A673 (cell line): ENCODE measurements at regions of chr4 and their contacts with region 1.

Region 1: GRCh38 chr4:153634738-153635353 is 49.2 kb upstream of the TLR2 start:
- DNase-seq: peak; percentile 60
- H3K4me3 ChIP-seq: no peak overlapping the region
- H3K27ac ChIP-seq: no peak overlapping the region
- H3K4me1 ChIP-seq: no peaks in the 10 kb centered on the region
- H3K27me3 ChIP-seq: no peaks in the 10 kb centered on the region
- CTCF ChIP-seq: peak; percentile 76

Region 2: DNA sequence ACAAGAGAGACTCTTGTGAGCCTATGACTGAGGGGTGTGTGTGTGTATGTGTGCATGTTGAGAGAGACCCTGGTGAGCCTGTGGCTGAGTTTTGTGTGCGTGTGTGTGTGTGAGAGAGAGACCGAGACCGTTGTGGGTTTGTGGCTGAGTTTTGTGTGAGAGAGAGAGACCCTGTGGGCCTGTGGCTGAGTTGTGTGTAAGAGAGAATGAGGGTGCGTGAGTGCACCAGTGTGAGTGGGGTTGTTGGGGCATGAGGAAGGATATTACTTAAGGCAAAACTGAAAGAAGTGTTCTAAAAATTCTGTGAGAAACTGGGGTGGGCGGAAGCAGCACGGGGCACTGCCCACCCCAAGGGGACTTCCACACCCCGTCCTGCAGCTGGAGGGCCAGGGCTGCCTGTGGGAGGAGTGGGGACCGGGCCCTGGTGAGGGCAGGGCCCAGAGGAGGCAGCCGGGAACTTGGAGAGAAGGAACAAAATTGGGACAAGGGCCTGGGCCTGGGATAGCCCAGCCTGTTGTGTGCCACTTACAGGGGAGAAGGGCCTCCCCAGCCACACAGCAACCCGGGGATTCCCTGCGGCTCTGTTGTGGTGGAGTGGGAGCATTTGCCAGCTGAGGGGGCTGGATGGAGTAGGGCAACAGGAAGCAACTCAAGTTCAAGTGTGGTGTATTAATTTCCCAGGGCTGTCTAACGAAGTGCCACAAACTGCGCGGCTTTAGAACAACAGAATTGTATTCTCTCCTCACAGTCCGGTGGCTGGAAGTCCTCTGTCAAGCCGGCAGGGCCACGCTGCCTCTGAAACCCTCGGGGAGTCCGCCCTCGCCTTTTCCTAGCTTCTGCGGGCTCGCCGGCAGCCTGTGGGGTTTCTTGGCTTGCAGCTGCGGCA is 146.6 kb before region 1 on chr4:
- CTCF ChIA-PET with region 1: no interaction called
- POLR2A ChIA-PET with region 1: no interaction called
- intact Hi-C with region 1: no loop called
- DNase-seq: peak; percentile 32
- H3K4me3 ChIP-seq: no peak overlapping the region
- H3K27ac ChIP-seq: peak overlapping the region; percentile 40
- H3K4me1 ChIP-seq: peaks cover 47% of the 10 kb centered on the region
- H3K27me3 ChIP-seq: no peaks in the 10 kb centered on the region
- CTCF ChIP-seq: no peak

Region 3: GRCh38 chr4:153750197-153750817 is 115.5 kb after region 1 on chr4:
- CTCF ChIA-PET with region 1: interaction called, 12 read pairs
- POLR2A ChIA-PET with region 1: no interaction called
- intact Hi-C with region 1: loop called (anchors 1 kb)
- DNase-seq: peak; percentile 90
- H3K4me3 ChIP-seq: no peak overlapping the region
- H3K27ac ChIP-seq: no peak overlapping the region
- H3K4me1 ChIP-seq: no peaks in the 10 kb centered on the region
- H3K27me3 ChIP-seq: no peaks in the 10 kb centered on the region
- CTCF ChIP-seq: peak; percentile 89